CD4-positive, alpha-beta memory T cell (primary cell): ENCODE measurements at regions of chrX and their contacts with region 1.

Region 1: DNA sequence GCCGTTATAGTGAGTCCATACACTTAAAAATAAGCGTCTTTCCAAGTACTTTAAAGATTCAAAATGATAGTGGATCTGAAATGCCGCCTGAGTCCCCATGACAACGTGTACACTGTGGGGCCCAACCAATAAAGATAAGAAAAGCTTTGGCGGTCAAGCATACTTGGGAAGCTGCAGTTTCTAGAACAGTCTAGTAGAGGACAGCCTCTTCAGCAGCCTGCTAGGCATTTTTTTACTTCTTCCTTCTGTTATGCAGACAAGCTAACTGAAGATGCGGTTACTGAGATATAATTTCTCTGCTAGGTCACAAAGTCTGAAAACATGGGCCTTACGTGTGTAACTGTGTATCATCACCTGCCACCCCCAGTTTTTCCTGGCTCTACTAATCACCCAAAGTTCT is 402 bp upstream of the UPRT start:
- DNase-seq: peak in 1 of 5 donors; percentile 57
- H3K4me3 ChIP-seq: peak overlapping the region; percentile 31 to 64
- H3K4me3 Mint-ChIP-seq: peak overlapping the region; percentile 88 to 97 (median 94)
- H3K27ac ChIP-seq: peak overlapping the region; percentile 83
- H3K27ac Mint-ChIP-seq: peak overlapping the region; percentile 91 to 98 (median 94)
- H3K4me1 ChIP-seq: peaks cover 43% of the 10 kb centered on the region
- H3K4me1 Mint-ChIP-seq: peaks cover 20 to 57% (median 41%) of the 10 kb centered on the region in 4 donors
- H3K27me3 ChIP-seq: no peaks in the 10 kb centered on the region
- H3K27me3 Mint-ChIP-seq: no peaks in the 10 kb centered on the region

Region 2: GRCh38 chrX:75156021-75156945 is 117.2 kb before region 1 on chrX and contains the start of gene ABCB7:
- CTCF ChIA-PET with region 1: no interaction called
- POLR2A ChIA-PET with region 1: interaction called, 13 read pairs
- intact Hi-C with region 1: loop called (anchors 2 kb)
- DNase-seq: peak; percentile 56 to 70 (median 61)
- H3K4me3 ChIP-seq: peak within 1 kb of the TSS; percentile 65 to 74
- H3K4me3 Mint-ChIP-seq: peak within 1 kb of the TSS; percentile 89 to 98 (median 95)
- H3K27ac ChIP-seq: peak within 1 kb of the TSS; percentile 76
- H3K27ac Mint-ChIP-seq: peak within 1 kb of the TSS; percentile 95 to 98 (median 97)
- H3K4me1 ChIP-seq: peaks cover 20% of the 10 kb centered on the region
- H3K4me1 Mint-ChIP-seq: peaks cover 20 to 49% (median 31%) of the 10 kb centered on the region in 4 donors
- H3K27me3 ChIP-seq: no peaks in the 10 kb centered on the region
- H3K27me3 Mint-ChIP-seq: no peaks in the 10 kb centered on the region
- total RNA-seq, gene ABCB7: 24.1 to 29.4 TPM

Region 3: GRCh38 chrX:75522565-75523431 is 249.3 kb after region 1 on chrX and contains the start of gene ZDHHC15:
- CTCF ChIA-PET with region 1: no interaction called
- POLR2A ChIA-PET with region 1: no interaction called
- intact Hi-C with region 1: loop called (anchors 5 kb)
- DNase-seq: peak; percentile 33 to 66 (median 37)
- H3K4me3 ChIP-seq: peak within 1 kb of the TSS; percentile 40 to 47
- H3K4me3 Mint-ChIP-seq: peak within 1 kb of the TSS; percentile 86 to 94 (median 90)
- H3K27ac ChIP-seq: no peak within 1 kb of the TSS
- H3K27ac Mint-ChIP-seq: peak within 1 kb of the TSS; percentile 57 to 95 (median 80)
- H3K4me1 ChIP-seq: peaks cover 8% of the 10 kb centered on the region
- H3K4me1 Mint-ChIP-seq: peaks cover 13 to 23% (median 20%) of the 10 kb centered on the region in 4 donors
- H3K27me3 ChIP-seq: no peaks in the 10 kb centered on the region
- H3K27me3 Mint-ChIP-seq: no peaks in the 10 kb centered on the region
- total RNA-seq, gene ZDHHC15: 0.47 to 0.53 TPM

Region 4: GRCh38 chrX:76148753-76149152 is 875.3 kb after region 1 on chrX:
- CTCF ChIA-PET with region 1: no interaction called
- POLR2A ChIA-PET with region 1: interaction called, 4 read pairs
- intact Hi-C with region 1: loop called (anchors 10 kb)
- DNase-seq: peak; percentile 60 to 74 (median 69)
- H3K4me3 ChIP-seq: peak overlapping the region; percentile 6 to 32
- H3K4me3 Mint-ChIP-seq: peak overlapping the region; percentile 73 to 92 (median 82)
- H3K27ac ChIP-seq: peak overlapping the region; percentile 67
- H3K27ac Mint-ChIP-seq: peak overlapping the region; percentile 89 to 99 (median 97)
- H3K4me1 ChIP-seq: peaks cover 25% of the 10 kb centered on the region
- H3K4me1 Mint-ChIP-seq: peaks cover 10 to 27% (median 20%) of the 10 kb centered on the region in 4 donors
- H3K27me3 ChIP-seq: no peaks in the 10 kb centered on the region
- H3K27me3 Mint-ChIP-seq: no peaks in the 10 kb centered on the region

Region 5: GRCh38 chrX:76427560-76428242 is 1154.2 kb after region 1 on chrX and contains the start of gene MAGEE1:
- CTCF ChIA-PET with region 1: no interaction called
- POLR2A ChIA-PET with region 1: no interaction called
- intact Hi-C with region 1: loop called (anchors 10 kb)
- DNase-seq: peak; percentile 78 to 81 (median 80)
- H3K4me3 ChIP-seq: peak within 1 kb of the TSS; percentile 36 to 73
- H3K4me3 Mint-ChIP-seq: peak within 1 kb of the TSS; percentile 87 to 94 (median 94)
- H3K27ac ChIP-seq: peak within 1 kb of the TSS; percentile 67
- H3K27ac Mint-ChIP-seq: peak within 1 kb of the TSS; percentile 87 to 96 (median 94)
- H3K4me1 ChIP-seq: peaks cover 33% of the 10 kb centered on the region
- H3K4me1 Mint-ChIP-seq: peaks cover 17 to 43% (median 28%) of the 10 kb centered on the region in 4 donors
- H3K27me3 ChIP-seq: no peaks in the 10 kb centered on the region
- H3K27me3 Mint-ChIP-seq: no peaks in the 10 kb centered on the region
- total RNA-seq, gene MAGEE1: 10.5 to 11.0 TPM